ENCODE measurements at regions of chr16 and their contacts with region 1.

Region 1: DNA sequence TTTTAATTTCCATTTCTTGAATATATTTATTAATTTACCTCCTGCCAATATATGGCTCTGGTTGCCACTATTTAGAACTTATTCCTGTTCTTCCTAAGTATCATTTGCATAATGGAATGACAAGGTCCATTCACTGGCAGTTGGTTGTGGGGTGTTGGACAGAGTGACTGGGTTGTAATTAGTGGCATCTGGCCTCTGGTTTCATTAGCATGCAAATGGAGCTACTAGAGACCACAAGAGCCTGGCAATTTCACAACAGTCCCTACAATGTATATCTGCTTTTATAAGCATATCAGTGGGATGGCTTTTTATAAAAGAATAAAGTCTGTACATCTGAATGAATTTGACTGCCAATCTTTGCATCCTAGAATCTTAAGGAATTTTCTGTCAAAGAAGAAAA is 1030.9 kb upstream of the CDH8 start:
- DNase-seq: no peak
- H3K4me3 ChIP-seq: no peak overlapping the region
- H3K27ac ChIP-seq: no peak overlapping the region
- H3K4me1 ChIP-seq: no peaks in the 10 kb centered on the region
- H3K27me3 ChIP-seq: no peaks in the 10 kb centered on the region
- CTCF ChIP-seq: no peak

Region 2: GRCh38 chr16:62280506-62280905 is 786.6 kb before region 1 on chr16:
- CTCF ChIA-PET with region 1: interaction called, 31 read pairs
- POLR2A ChIA-PET with region 1: no interaction called
- intact Hi-C with region 1: no loop called
- DNase-seq: no peak
- H3K4me3 ChIP-seq: no peak overlapping the region
- H3K27ac ChIP-seq: no peak overlapping the region
- H3K4me1 ChIP-seq: no peaks in the 10 kb centered on the region
- H3K27me3 ChIP-seq: peaks cover 8% of the 10 kb centered on the region; the same call in 1 of the 2 replicates
- CTCF ChIP-seq: no peak

Region 3: GRCh38 chr16:62977876-62978275 is 89.3 kb before region 1 on chr16:
- CTCF ChIA-PET with region 1: no interaction called
- POLR2A ChIA-PET with region 1: no interaction called
- intact Hi-C with region 1: no loop called
- DNase-seq: no peak
- H3K4me3 ChIP-seq: no peak overlapping the region
- H3K27ac ChIP-seq: no peak overlapping the region
- H3K4me1 ChIP-seq: no peaks in the 10 kb centered on the region
- H3K27me3 ChIP-seq: peaks cover 12% of the 10 kb centered on the region; the same call in 1 of the 2 replicates
- CTCF ChIP-seq: no peak

Region 4: GRCh38 chr16:63192980-63193379 is 125.8 kb after region 1 on chr16:
- CTCF ChIA-PET with region 1: no interaction called
- POLR2A ChIA-PET with region 1: no interaction called
- intact Hi-C with region 1: no loop called
- DNase-seq: no peak
- H3K4me3 ChIP-seq: no peak overlapping the region
- H3K27ac ChIP-seq: no peak overlapping the region
- H3K4me1 ChIP-seq: no peaks in the 10 kb centered on the region
- H3K27me3 ChIP-seq: no peaks in the 10 kb centered on the region
- CTCF ChIP-seq: no peak

Measured in PC-9 (cell line).